ENCODE measurements at regions of chr2 and their contacts with region 1.

Region 1: DNA sequence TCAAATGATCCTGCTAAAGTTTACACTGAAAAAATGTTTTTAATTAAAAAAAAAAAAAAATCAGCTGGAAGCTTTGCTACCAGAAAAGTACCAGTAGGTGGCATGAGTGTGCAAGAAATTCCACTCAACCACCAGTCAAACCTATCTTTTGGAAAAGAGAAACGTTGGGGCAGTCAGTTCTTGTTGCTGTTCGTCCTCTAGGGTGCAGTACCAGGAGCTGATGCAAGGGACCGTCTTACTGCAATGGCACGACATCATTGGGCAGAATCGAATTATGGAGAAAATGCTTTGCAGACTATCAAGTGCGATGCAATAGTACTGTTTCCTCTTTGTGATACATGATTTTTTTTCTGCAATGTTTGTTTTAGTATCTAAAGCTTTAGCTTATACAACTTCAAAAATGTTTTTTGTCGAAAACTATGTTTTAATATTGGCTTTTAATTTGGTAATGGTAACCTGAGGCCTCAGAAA is 18.3 kb downstream of the YPEL5 start:
- DNase-seq: peak; percentile 83 to 92
- H3K4me3 ChIP-seq: no peak overlapping the region
- H3K4me1 ChIP-seq: no peaks in the 10 kb centered on the region
- H3K27me3 ChIP-seq: no peaks in the 10 kb centered on the region

Region 2: GRCh38 chr2:30706534-30707304 is 541.6 kb after region 1 on chr2:
- in situ Hi-C with region 1: loop called (anchors 5 kb)
- DNase-seq: peak; percentile 72 to 87
- H3K4me3 ChIP-seq: no peak overlapping the region
- H3K4me1 ChIP-seq: peaks cover 9% of the 10 kb centered on the region
- H3K27me3 ChIP-seq: no peaks in the 10 kb centered on the region

Region 3: DNA sequence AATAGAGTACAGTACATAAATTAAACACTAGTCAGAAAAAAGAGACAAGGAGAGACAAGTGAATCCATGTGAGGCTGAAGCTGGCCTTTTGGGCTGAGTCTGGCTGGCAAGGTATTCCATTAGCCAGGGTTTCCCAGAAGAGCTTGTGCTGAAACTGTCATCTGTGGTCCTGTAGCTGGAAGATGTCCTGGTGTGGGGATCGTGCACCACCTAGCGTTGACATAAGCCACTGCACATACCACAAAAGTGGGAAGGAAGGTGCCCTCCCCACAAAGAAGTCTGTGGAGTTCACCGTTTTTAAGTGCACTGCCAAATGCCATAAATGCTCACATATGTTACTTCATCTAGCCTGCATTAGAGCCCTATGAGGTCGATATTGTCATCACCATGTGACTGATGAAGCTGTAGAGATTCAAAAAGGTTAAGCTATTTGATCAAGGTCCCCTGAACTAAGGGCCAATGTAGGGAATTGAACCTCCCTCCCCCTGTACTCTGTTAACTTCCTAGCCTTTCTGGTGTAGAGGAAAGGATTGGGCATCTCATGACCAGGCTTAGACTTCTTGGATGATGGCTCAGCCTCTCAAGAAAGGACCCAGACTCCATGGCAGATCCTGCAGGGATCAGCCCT is 1005.1 kb after region 1 on chr2:
- in situ Hi-C with region 1: loop called (anchors 25 kb)
- DNase-seq: peak; percentile 28 to 66
- H3K4me3 ChIP-seq: no peak overlapping the region
- H3K4me1 ChIP-seq: no peaks in the 10 kb centered on the region
- H3K27me3 ChIP-seq: no peaks in the 10 kb centered on the region

Region 4: GRCh38 chr2:31333527-31334183 is 1168.6 kb after region 1 on chr2:
- in situ Hi-C with region 1: loop called (anchors 25 kb)
- DNase-seq: peak; percentile 36 to 80
- H3K4me3 ChIP-seq: no peak overlapping the region
- H3K4me1 ChIP-seq: no peaks in the 10 kb centered on the region
- H3K27me3 ChIP-seq: no peaks in the 10 kb centered on the region; the same call in 1 of the 2 replicates

Measured in HAP-1 (cell line).